ENCODE measurements at regions of chr10 and their contacts with region 1.

Region 1: DNA sequence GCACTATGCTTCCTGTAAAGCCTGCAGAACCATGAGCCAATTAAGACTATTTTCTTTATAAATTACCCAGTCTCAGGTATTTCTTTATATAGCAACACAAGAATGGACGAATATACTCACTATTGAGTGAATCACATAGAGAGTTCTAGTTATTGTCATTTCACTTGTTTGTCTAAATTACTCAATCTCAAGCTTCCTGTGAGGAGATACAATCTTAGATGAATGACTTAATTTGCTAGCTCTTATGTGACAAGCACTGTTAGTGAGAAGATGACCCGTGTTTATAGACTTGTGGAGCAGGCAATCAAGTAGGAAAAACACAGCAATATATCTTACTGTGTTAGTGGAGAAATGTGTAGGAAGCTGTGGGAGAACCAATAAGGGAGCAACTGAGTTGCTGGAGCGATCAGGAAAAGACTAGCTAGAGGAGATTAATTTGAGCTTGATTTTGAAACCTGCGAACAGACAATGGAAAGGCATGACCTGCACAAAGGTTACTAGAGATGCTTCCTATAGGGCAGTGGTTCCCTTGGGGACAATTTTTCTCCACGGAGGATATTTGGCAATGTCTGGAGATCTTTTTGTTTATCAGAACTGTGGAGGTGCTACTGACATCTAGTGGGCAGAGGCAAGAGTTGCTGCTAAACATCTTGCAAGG is 481.1 kb downstream of the SH2D4B start:
- DNase-seq: peak; percentile 33
- ATAC-seq: peak; percentile 53
- H3K4me3 Mint-ChIP-seq: no peak overlapping the region
- H3K27ac Mint-ChIP-seq: no peak overlapping the region
- H3K4me1 Mint-ChIP-seq: no peaks in the 10 kb centered on the region
- H3K27me3 Mint-ChIP-seq: no peaks in the 10 kb centered on the region

Region 2: DNA sequence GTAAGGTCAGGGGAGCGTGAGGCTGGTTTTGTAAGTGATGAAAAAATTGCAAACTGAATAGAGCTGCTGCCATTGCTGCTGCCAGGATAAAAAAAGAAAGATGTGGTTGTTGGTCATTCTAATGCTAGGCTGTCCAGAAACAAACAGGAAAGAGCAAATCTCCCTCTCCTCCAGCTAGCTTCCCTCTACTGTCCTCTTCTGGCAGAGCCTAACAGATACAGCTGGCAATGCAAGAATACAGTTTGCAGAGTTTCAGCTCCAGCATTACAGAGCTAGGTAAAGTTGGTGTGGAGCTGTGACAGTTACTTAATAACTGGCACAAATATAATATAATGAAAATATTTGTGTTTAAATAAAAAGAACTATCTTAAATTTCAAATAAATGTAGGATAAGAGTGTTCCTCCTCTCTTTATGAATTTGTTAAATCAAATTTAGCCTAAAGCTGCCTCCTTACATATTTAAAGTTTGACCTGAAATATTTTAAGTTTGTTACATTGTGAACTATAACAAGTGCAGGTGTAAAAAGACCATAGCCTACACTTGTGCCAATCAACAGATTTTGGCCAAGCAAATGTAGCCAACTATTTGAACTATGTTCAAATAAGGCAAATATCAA is 73.5 kb before region 1 on chr10:
- CTCF ChIA-PET with region 1: no interaction called
- POLR2A ChIA-PET with region 1: no interaction called
- DNase-seq: no peak
- ATAC-seq: no peak
- H3K4me3 Mint-ChIP-seq: no peak overlapping the region
- H3K27ac Mint-ChIP-seq: no peak overlapping the region
- H3K4me1 Mint-ChIP-seq: no peaks in the 10 kb centered on the region
- H3K27me3 Mint-ChIP-seq: no peaks in the 10 kb centered on the region

Region 3: GRCh38 chr10:81008726-81009125 is 10.1 kb before region 1 on chr10:
- CTCF ChIA-PET with region 1: interaction called, 12 read pairs
- POLR2A ChIA-PET with region 1: no interaction called
- DNase-seq: no peak
- ATAC-seq: no peak
- H3K4me3 Mint-ChIP-seq: no peak overlapping the region
- H3K27ac Mint-ChIP-seq: no peak overlapping the region
- H3K4me1 Mint-ChIP-seq: no peaks in the 10 kb centered on the region
- H3K27me3 Mint-ChIP-seq: no peaks in the 10 kb centered on the region

Region 4: DNA sequence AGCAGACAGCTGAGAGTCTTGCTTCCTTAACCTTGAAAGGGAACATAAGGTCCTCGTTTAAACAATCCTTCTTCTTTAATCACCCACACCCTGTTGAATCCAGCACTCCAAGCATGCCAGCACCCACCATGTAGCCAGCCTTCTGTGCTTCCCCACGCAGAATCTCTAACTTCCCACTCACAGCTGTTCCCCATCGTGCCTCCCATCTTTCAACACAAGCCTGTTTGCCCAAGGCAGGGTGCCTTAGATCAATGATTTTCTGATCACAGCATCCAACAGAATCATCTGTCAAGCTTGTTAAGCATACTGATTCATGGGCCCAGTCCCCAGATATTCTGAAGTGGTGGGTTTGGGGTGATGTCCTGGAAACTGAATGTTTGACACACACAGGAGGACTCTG is 49.6 kb after region 1 on chr10:
- CTCF ChIA-PET with region 1: no interaction called
- POLR2A ChIA-PET with region 1: no interaction called
- DNase-seq: no peak
- ATAC-seq: no peak
- H3K4me3 Mint-ChIP-seq: no peak overlapping the region
- H3K27ac Mint-ChIP-seq: no peak overlapping the region
- H3K4me1 Mint-ChIP-seq: no peaks in the 10 kb centered on the region
- H3K27me3 Mint-ChIP-seq: no peaks in the 10 kb centered on the region

Region 5: GRCh38 chr10:81215498-81215897 is 196.7 kb after region 1 on chr10:
- CTCF ChIA-PET with region 1: no interaction called
- POLR2A ChIA-PET with region 1: no interaction called
- DNase-seq: no peak
- ATAC-seq: no peak
- H3K4me3 Mint-ChIP-seq: no peak overlapping the region
- H3K27ac Mint-ChIP-seq: no peak overlapping the region
- H3K4me1 Mint-ChIP-seq: no peaks in the 10 kb centered on the region
- H3K27me3 Mint-ChIP-seq: no peaks in the 10 kb centered on the region

Measured in activated CD8-positive, alpha-beta T cell treated with anti-CD3 and anti-CD28 coated beads, Interleukin-2, amount 10 ng/mL, durations not matched to agents 7 days and 5 days (primary cell).